ENCODE measurements at regions of chr3 and their contacts with region 1.

Region 1: DNA sequence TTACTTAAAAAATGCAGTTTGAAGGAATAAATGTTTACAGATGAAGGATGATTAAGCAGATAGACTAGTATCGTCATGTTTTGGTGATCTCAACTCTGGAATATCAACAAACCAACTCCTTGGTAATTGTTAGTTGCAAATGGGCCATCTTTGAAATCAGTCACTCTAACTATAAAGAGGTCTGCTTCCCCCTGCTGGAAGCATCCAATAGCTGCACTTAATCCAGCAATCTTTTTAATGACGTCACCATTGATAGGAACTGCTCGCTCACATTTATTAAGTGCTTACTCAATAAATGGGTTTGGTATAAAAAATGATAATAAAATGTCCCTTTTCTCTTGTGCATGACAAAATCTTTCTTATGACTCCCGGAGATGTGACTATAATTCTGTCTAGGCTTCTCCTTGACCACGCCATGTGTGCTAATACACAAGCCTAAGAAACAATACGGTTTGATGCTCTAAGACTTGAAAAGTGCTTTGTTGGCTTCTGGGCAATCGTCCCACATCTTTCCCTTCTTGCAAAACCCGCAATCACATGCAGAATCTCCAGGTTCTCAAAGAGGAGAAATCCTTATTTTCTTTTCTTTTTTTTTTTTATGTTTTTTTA is 227.6 kb upstream of the POU1F1 start:
- DNase-seq: no peak
- H3K4me3 Mint-ChIP-seq: no peak overlapping the region
- H3K27ac Mint-ChIP-seq: no peak overlapping the region
- H3K4me1 Mint-ChIP-seq: no peaks in the 10 kb centered on the region
- H3K27me3 Mint-ChIP-seq: no peaks in the 10 kb centered on the region

Region 2: DNA sequence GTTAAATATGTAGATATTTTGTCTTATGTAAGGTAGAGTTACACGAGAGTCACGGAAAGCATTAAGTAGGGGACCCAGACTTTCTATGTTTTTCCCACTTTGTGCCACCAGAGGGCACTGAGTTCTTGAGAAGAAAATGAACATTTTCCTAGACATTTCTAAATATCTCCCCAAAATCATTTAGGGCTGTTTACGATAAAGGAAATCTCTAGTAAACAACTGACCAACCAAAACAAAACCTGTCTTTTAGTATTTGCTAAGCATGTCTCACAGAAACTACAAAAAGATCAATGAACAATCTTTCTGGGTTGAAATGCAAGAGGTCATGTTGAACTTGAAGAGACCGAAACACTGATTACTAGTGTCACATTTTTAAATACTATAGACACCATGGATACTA is 243.7 kb before region 1 on chr3:
- intact Hi-C with region 1: loop called (anchors 1 kb)
- DNase-seq: peak; percentile 14
- H3K4me3 Mint-ChIP-seq: no peak overlapping the region
- H3K27ac Mint-ChIP-seq: no peak overlapping the region
- H3K4me1 Mint-ChIP-seq: peaks cover 9% of the 10 kb centered on the region
- H3K27me3 Mint-ChIP-seq: peaks cover 11% of the 10 kb centered on the region

Region 3: GRCh38 chr3:87298111-87298718 is 205.8 kb before region 1 on chr3:
- intact Hi-C with region 1: loop called (anchors 1 kb)
- DNase-seq: no peak
- H3K4me3 Mint-ChIP-seq: no peak overlapping the region
- H3K27ac Mint-ChIP-seq: no peak overlapping the region
- H3K4me1 Mint-ChIP-seq: peaks cover 6% of the 10 kb centered on the region
- H3K27me3 Mint-ChIP-seq: no peaks in the 10 kb centered on the region

Region 4: DNA sequence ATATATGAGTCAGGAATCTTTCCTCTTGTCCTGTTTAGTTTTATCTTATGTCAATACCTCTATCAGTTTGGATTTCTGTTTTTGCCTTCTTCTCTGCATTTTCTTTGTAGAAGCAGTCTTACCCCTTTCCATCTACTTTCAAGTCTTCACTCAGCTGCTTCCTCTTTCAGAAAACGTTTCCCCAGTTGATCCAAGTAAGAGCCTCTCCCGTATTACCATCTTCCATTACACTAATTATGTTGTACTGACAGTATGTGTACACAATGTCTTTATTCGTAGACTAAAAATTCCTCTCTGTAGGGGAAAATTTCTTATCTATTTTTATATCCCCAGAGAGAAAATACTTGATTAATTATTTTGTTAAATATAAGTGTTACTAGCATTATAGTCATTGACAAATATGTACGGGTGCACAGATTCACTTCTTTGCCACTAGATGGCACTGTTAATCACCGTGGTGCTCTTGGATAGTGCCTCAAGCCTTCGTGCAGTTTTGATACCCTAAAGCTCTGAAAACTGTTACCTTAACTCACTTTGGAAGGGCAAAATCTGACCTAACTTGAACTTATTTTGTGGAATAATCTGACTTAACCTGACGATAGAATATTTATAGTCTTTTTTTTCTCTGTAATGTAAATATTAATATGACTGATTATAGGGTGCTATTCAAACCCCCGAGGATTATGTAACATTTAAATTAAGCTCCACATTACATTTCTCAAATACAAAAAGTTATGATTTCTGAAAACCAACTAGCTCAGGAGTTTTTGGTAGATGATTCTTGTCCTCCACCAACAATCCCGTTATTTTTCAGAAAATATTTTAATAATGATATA is 153.4 kb before region 1 on chr3:
- intact Hi-C with region 1: loop called (anchors 1 kb)
- DNase-seq: no peak
- H3K4me3 Mint-ChIP-seq: no peak overlapping the region
- H3K27ac Mint-ChIP-seq: no peak overlapping the region
- H3K4me1 Mint-ChIP-seq: peaks cover 2% of the 10 kb centered on the region
- H3K27me3 Mint-ChIP-seq: peaks cover 11% of the 10 kb centered on the region

Measured in activated T-helper 2 cell treated with anti-CD3 and anti-CD28 coated beads, Interferon-gamma antibody, Interleukin-2, Interleukin-4, amounts not matched to agents 10 μg/mL and 5 μg/mL and 100 μg/mL, durations not matched to agents 14 hours and 24 hours and 36 hours (primary cell).